ENCODE measurements at regions of chr7 and their contacts with region 1.

Region 1: GRCh38 chr7:130896898-130897514 is 163.0 kb upstream of the KLF14 start:
- DNase-seq: peak; percentile 91
- H3K4me3 ChIP-seq: no peak overlapping the region
- H3K27ac ChIP-seq: peak overlapping the region in 6 of 8 donors; percentile 2 to 70 (median 40)
- H3K4me1 ChIP-seq: peaks cover 34 to 93% (median 69%) of the 10 kb centered on the region in 6 donors
- H3K27me3 ChIP-seq: no peaks in the 10 kb centered on the region
- CTCF ChIP-seq: peak; percentile 70 to 92 (median 84)
- POLR2A ChIP-seq: no peak

Region 2: GRCh38 chr7:130961128-130961601 is 64.2 kb after region 1 on chr7:
- intact Hi-C with region 1: loop called (anchors 10 kb)
- DNase-seq: peak; percentile 74
- H3K4me3 ChIP-seq: peak overlapping the region in 7 of 8 donors; percentile 14 to 58 (median 30)
- H3K27ac ChIP-seq: peak overlapping the region; percentile 55 to 92 (median 88)
- H3K4me1 ChIP-seq: peaks cover 51 to 96% (median 81%) of the 10 kb centered on the region in 6 donors
- H3K27me3 ChIP-seq: no peaks in the 10 kb centered on the region
- CTCF ChIP-seq: no peak
- POLR2A ChIP-seq: peak in 1 of 3 donors; percentile 62

Region 3: DNA sequence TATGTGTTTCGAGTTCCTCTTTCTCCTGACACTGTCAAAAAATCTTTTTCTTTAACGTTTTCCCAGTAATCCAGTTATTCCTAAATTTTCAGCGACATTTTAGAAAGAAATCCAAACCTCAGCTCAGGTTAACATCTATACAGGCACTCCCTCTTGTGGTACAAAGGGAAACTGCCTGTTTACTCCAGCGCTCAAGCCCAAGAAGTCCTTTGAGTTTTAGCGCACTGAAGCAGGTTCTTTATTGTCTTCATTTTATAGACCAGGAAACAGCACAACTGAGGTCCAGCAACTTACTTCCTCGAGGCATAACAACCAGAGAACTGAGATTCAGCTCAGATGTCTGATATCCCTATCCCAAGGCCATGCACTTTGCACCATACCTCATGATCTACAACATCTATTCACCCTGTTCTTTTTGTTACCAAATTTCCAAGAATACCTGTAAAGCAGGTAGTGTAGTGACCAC is 143.5 kb after region 1 on chr7:
- intact Hi-C with region 1: loop called (anchors 5 kb)
- DNase-seq: no peak
- H3K4me3 ChIP-seq: no peak overlapping the region
- H3K27ac ChIP-seq: peak overlapping the region in 7 of 8 donors; percentile 37 to 61 (median 44)
- H3K4me1 ChIP-seq: peaks cover 32 to 86% (median 55%) of the 10 kb centered on the region in 6 donors
- H3K27me3 ChIP-seq: no peaks in the 10 kb centered on the region
- CTCF ChIP-seq: peak; percentile 81 to 94 (median 89)
- POLR2A ChIP-seq: no peak

Measured in spleen (tissue), 13 donors.